GM13977 (cell line): ENCODE measurements at regions of chr1 and their contacts with region 1.

Region 1: GRCh38 chr1:85307987-85308832 is 31.8 kb upstream of the BCL10 start:
- DNase-seq: peak; percentile 67
- CTCF ChIP-seq: peak; percentile 94

Region 2: GRCh38 chr1:85078903-85079302 is 229.3 kb before region 1 on chr1:
- in situ Hi-C with region 1: no loop called
- DNase-seq: no peak
- CTCF ChIP-seq: peak; percentile 32

Region 3: GRCh38 chr1:85692730-85693314 is 384.6 kb after region 1 on chr1:
- in situ Hi-C with region 1: loop called (anchors 25 kb)
- DNase-seq: peak; percentile 14
- CTCF ChIP-seq: peak; percentile 37

Region 4: GRCh38 chr1:86018283-86018923 is 710.2 kb after region 1 on chr1:
- in situ Hi-C with region 1: loop called (anchors 25 kb)
- DNase-seq: peak; percentile 40
- CTCF ChIP-seq: peak; percentile 66